ENCODE measurements at regions of chrX and their contacts with region 1.

Region 1: DNA sequence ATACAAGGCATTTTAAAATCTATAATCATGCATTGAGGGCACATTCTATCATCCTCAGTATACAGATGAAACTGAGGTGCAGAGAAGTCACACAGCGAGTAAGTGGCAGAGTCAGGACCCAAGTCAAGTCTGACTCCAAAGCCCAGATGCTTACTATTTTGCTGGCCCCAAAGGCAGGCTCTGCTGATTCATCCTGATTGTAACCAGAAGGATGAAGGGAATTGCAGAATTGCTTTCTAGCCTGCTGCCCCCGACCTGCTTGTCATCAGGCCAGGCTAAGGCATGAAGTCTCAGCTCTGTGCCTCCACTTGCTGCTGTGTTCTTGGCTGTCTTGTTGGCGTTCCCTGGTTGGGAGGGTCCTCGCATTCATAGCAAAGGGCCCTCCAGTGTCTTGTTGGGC is 62.7 kb downstream of the SLC9A6 start:
- DNase-seq: no peak
- ATAC-seq: peak; percentile 58

Region 2: GRCh38 chrX:136076942-136077341 is 29.0 kb after region 1 on chrX:
- intact Hi-C with region 1: no loop called
- DNase-seq: no peak
- ATAC-seq: no peak

Region 3: GRCh38 chrX:136159611-136160025 is 111.6 kb after region 1 on chrX:
- intact Hi-C with region 1: loop called (anchors 10 kb)
- DNase-seq: no peak
- ATAC-seq: peak; percentile 72